Right cardiac atrium (tissue), 5 donors: ENCODE measurements at regions of chr16 and their contacts with region 1.

Region 1: GRCh38 chr16:47073223-47074155 is 70.3 kb downstream of the NETO2 start:
- DNase-seq: no peak
- ATAC-seq: no peak
- H3K4me3 ChIP-seq: no peak overlapping the region
- H3K27ac ChIP-seq: no peak overlapping the region
- H3K4me1 ChIP-seq: no peaks in the 10 kb centered on the region
- H3K27me3 ChIP-seq: no peaks in the 10 kb centered on the region

Region 2: GRCh38 chr16:46673320-46674013 is 400.0 kb before region 1 on chr16:
- intact Hi-C with region 1: no loop called
- DNase-seq: peak in 2 of 3 donors; percentile 23 to 52
- ATAC-seq: peak; percentile 83 to 88
- H3K4me3 ChIP-seq: no peak overlapping the region
- H3K27ac ChIP-seq: no peak overlapping the region
- H3K4me1 ChIP-seq: no peaks in the 10 kb centered on the region
- H3K27me3 ChIP-seq: no peaks in the 10 kb centered on the region

Region 3: GRCh38 chr16:46885960-46886763 is 187.3 kb before region 1 on chr16:
- intact Hi-C with region 1: no loop called
- DNase-seq: peak in 1 of 3 donors; percentile 41
- ATAC-seq: no peak
- H3K4me3 ChIP-seq: no peak overlapping the region
- H3K27ac ChIP-seq: peak overlapping the region; percentile 21
- H3K4me1 ChIP-seq: peaks cover 4% of the 10 kb centered on the region
- H3K27me3 ChIP-seq: no peaks in the 10 kb centered on the region

Region 4: GRCh38 chr16:47713225-47713595 is 639.7 kb after region 1 on chr16:
- intact Hi-C with region 1: loop called in 1 of 4 experiments (anchors 10 kb)
- DNase-seq: peak in 1 of 3 donors; percentile 20
- ATAC-seq: peak; percentile 31 to 93
- H3K4me3 ChIP-seq: no peak overlapping the region
- H3K27ac ChIP-seq: no peak overlapping the region
- H3K4me1 ChIP-seq: no peaks in the 10 kb centered on the region
- H3K27me3 ChIP-seq: no peaks in the 10 kb centered on the region